ENCODE measurements at regions of chr4 and their contacts with region 1.

Region 1: DNA sequence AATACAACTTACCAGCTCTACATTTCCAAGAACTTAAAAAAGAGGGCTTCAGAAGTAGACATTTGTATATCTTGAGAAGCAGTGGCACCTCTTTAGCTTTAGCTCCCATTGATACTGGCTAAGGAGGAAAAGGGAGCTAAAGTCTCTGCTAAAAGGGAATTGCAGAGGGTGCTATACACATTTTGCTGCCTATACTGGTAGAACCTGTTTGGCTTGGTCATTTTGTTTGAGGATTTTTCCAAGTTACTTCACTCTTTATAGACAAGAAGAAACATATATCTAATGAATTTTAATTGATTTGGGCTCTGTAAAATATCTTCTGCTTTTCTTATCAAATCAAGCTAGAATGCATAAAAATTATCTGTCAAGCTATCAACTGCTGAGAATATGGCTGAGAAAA is 11.8 kb downstream of the PAPSS1 start:
- DNase-seq: no peak
- H3K4me3 ChIP-seq: no peak overlapping the region
- H3K27ac ChIP-seq: no peak overlapping the region
- H3K4me1 ChIP-seq: peaks cover 0 to 17% (median 0%) of the 10 kb centered on the region in 4 experiments
- H3K27me3 ChIP-seq: no peaks in the 10 kb centered on the region

Region 2: GRCh38 chr4:107693132-107693531 is 15.1 kb before region 1 on chr4:
- CTCF ChIA-PET with region 1: interaction called, 10 read pairs
- POLR2A ChIA-PET with region 1: no interaction called
- DNase-seq: peak; percentile 19 to 85 (median 77)
- H3K4me3 ChIP-seq: peak overlapping the region in 1 of 7 experiments; percentile 6
- H3K27ac ChIP-seq: peak overlapping the region; percentile 7 to 69
- H3K4me1 ChIP-seq: peaks cover 10 to 18% (median 12%) of the 10 kb centered on the region in 4 experiments
- H3K27me3 ChIP-seq: no peaks in the 10 kb centered on the region

Region 3: DNA sequence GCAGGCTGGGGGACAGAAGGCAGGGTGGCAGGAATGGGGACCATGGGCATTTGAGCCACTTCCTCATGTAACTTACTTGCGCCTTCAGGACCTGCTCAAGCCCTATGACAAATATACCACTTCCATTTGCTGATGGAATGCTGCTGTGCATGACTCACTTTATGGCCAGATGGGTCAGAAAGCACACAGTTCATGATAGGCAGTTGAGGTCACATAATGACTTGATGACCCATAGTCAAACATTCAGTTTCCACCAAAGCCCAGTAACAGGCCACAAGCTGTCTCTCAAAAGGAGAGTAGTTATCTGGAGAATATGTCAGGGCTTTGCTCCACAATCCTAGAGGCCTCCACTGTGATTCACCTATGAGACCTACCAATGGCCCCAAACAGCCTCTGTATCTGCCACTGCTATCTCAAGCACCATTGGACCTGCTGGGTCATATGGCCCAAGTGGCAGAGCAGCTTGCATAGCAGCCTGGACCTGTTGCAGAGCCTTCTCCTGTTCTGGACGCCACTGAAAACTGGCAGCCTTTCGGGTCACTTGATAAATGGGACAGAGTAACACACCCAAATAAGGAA is 17.1 kb after region 1 on chr4:
- CTCF ChIA-PET with region 1: no interaction called
- POLR2A ChIA-PET with region 1: no interaction called
- DNase-seq: no peak
- H3K4me3 ChIP-seq: no peak overlapping the region
- H3K27ac ChIP-seq: no peak overlapping the region
- H3K4me1 ChIP-seq: peaks cover 0 to 19% (median 14%) of the 10 kb centered on the region in 4 experiments
- H3K27me3 ChIP-seq: no peaks in the 10 kb centered on the region

Region 4: DNA sequence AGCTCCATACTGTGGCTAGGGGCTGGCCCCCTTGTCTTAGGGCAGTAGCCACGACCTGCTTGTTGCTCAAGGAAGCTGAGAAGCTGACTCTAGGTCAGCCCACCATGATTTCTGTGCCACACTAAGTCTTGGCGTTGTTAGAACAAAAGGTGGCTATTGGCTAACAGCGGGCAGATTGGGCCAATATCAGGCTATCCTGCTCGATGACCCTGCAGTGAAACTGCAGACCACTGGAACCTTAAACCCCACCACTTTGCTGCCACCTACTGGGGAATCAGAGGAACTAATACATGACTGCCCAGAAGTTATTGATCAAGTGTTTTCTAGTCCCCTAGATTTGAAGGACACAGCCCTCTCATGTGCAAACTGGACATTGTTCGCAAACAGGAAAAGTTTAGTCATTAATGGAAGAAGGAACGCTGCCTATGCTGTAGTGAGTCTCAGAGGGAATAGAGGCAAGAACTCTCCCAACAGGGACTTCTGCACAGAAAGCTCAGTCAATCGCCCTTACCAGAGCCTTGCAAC is 28.8 kb after region 1 on chr4:
- CTCF ChIA-PET with region 1: no interaction called
- POLR2A ChIA-PET with region 1: no interaction called
- DNase-seq: peak; percentile 51 to 57 (median 53)
- H3K4me3 ChIP-seq: no peak overlapping the region
- H3K27ac ChIP-seq: no peak overlapping the region
- H3K4me1 ChIP-seq: peaks cover 5 to 35% (median 13%) of the 10 kb centered on the region in 4 experiments
- H3K27me3 ChIP-seq: no peaks in the 10 kb centered on the region

Measured in common myeloid progenitor, CD34-positive (primary cell).